Esophagus muscularis mucosa (tissue), 4 donors: ENCODE measurements at regions of chr4 and their contacts with region 1.

Region 1: GRCh38 chr4:174156239-174156826 is 127.1 kb downstream of the FBXO8 start:
- DNase-seq: no peak
- H3K4me3 ChIP-seq: peak overlapping the region in 2 of 4 donors; percentile 3
- H3K27ac ChIP-seq: peak overlapping the region in 2 of 4 donors; percentile 48 to 60
- H3K4me1 ChIP-seq: peaks cover 12 to 39% (median 36%) of the 10 kb centered on the region in 4 donors
- H3K27me3 ChIP-seq: no peaks in the 10 kb centered on the region
- CTCF ChIP-seq: peak; percentile 55 to 73 (median 73)
- EP300 ChIP-seq: no peak
- POLR2A ChIP-seq: no peak

Region 2: DNA sequence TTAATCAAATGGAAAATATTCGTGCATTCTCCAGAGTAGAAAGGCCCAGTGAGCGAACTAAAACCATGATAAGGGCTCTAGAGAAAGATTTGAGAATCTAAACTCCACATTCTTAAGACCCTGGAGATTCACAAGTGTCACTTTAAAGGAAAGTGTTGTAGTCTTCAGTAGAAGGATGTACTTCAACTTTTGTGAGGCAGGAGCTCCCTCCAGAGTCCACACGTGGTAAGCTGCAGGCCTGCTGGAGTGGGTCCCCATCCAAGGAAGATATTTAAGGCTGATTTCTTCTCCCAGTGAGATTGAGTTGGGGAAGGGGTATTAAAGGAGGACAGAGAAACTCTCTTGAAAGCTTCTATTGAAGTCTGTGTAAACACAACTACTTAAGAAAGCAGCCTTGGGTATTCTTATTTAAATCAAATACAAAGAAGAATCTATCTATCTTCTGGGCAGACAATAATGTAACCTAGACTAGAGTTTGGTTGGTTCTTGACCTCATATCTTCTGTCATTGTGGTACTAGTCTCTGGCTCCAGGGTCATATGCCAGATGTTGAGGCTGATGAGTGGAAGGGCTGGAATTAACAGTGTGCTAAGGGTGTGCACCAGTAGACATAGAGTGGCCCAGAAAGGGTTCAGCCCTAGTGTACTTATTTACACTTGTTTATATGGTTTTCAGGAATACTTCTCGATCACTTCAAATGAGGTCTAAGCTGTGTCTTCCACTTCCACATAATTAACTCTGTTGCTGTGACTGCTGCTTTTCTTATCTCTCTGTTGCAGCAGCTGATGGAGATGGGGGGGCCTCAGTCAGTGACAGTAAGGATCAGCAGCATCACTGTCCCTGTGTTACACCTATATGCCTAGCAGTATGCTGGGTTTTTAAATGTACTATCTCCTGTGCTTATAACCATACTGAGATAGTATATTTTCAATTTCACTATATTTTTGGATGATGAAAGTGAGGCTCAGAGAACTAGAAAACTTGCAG is 898.3 kb before region 1 on chr4:
- intact Hi-C with region 1: no loop called
- DNase-seq: no peak
- H3K4me3 ChIP-seq: no peak overlapping the region
- H3K27ac ChIP-seq: no peak overlapping the region
- H3K4me1 ChIP-seq: peaks cover 0 to 4% (median 0%) of the 10 kb centered on the region in 4 donors
- H3K27me3 ChIP-seq: no peaks in the 10 kb centered on the region
- CTCF ChIP-seq: peak; percentile 78 to 84 (median 82)
- EP300 ChIP-seq: no peak
- POLR2A ChIP-seq: no peak

Region 3: GRCh38 chr4:173505924-173506518 is 650.3 kb before region 1 on chr4:
- intact Hi-C with region 1: loop called (anchors 5 kb)
- DNase-seq: peak; percentile 92
- H3K4me3 ChIP-seq: peak overlapping the region in 2 of 4 donors; percentile 20 to 41
- H3K27ac ChIP-seq: peak overlapping the region in 2 of 4 donors; percentile 34 to 43
- H3K4me1 ChIP-seq: peaks cover 17 to 64% (median 57%) of the 10 kb centered on the region in 4 donors
- H3K27me3 ChIP-seq: peaks cover 0 to 69% (median 0%) of the 10 kb centered on the region in 4 donors
- CTCF ChIP-seq: peak; percentile 73 to 83 (median 82)
- EP300 ChIP-seq: no peak
- POLR2A ChIP-seq: no peak

Region 4: DNA sequence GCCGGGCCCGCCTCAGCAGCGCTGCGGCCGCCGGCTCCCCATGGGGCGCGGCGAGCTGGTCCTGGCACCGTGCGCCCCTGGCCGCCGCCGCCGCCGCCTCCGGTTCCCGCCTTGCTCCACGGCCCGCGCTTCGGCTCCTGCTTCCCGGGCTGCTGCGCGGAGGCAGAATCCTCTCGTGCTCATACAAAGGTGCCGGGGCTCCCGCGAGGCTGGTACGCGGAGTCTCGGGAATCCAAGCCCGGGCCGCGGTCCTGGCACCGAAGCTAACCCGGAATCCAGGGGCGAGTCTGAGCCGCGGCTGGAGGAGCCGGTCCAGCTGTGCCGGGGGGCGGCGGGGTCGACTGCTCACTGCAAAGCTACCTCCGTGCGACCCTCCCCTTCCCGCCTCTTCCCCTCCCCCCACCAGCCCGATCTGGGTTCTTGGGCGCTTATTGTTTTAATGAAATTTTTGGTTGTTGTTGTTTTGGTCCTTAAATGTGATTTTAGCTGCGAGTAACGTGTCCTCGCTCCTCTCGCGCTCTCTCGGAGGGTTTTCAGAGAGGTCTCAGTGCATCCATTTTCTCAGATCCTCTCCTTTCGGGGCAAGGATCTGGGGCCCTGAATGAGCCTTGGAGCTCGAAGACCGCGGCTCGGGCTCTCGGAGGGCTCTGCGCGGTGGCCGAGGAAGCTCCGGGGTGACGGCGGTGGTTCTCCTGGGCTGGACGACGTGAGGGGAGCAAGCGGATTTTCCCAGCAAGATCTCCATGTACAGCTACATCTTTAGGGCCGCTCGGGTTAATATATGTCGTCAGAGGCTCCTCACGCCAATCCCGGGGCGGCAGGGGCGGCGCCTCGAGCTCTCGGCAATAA is 626.6 kb before region 1 on chr4 and contains the start of gene HAND2:
- intact Hi-C with region 1: loop called (anchors 5 kb)
- DNase-seq: no peak
- H3K4me3 ChIP-seq: peak within 1 kb of the TSS; percentile 82 to 90 (median 88)
- H3K27ac ChIP-seq: peak within 1 kb of the TSS; percentile 96 to 98 (median 98)
- H3K4me1 ChIP-seq: peaks cover 3 to 58% (median 38%) of the 10 kb centered on the region in 4 donors
- H3K27me3 ChIP-seq: peaks cover 0 to 54% (median 2%) of the 10 kb centered on the region in 4 donors
- CTCF ChIP-seq: no peak
- EP300 ChIP-seq: no peak
- POLR2A ChIP-seq: peak; percentile 81
- total RNA-seq, gene HAND2: 77.7 to 165 (median 138) TPM

Region 5: GRCh38 chr4:173748353-173748752 is 408.0 kb before region 1 on chr4:
- intact Hi-C with region 1: loop called (anchors 5 kb)
- DNase-seq: no peak
- H3K4me3 ChIP-seq: no peak overlapping the region
- H3K27ac ChIP-seq: peak overlapping the region in 1 of 4 donors; percentile 4
- H3K4me1 ChIP-seq: no peaks in the 10 kb centered on the region
- H3K27me3 ChIP-seq: no peaks in the 10 kb centered on the region
- CTCF ChIP-seq: peak; percentile 32 to 44 (median 36)
- EP300 ChIP-seq: no peak
- POLR2A ChIP-seq: no peak

Region 6: GRCh38 chr4:174483792-174484191 is 327.5 kb after region 1 on chr4:
- intact Hi-C with region 1: no loop called
- DNase-seq: no peak
- H3K4me3 ChIP-seq: no peak overlapping the region
- H3K27ac ChIP-seq: no peak overlapping the region
- H3K4me1 ChIP-seq: no peaks in the 10 kb centered on the region
- H3K27me3 ChIP-seq: no peaks in the 10 kb centered on the region
- CTCF ChIP-seq: no peak
- EP300 ChIP-seq: no peak
- POLR2A ChIP-seq: no peak

Region 7: GRCh38 chr4:174561560-174561959 is 405.2 kb after region 1 on chr4:
- intact Hi-C with region 1: no loop called
- DNase-seq: no peak
- H3K4me3 ChIP-seq: no peak overlapping the region
- H3K27ac ChIP-seq: no peak overlapping the region
- H3K4me1 ChIP-seq: peaks cover 0 to 3% (median 0%) of the 10 kb centered on the region in 4 donors
- H3K27me3 ChIP-seq: no peaks in the 10 kb centered on the region
- CTCF ChIP-seq: no peak
- EP300 ChIP-seq: no peak
- POLR2A ChIP-seq: no peak